Activated T-helper 2 cell treated with anti-CD3 and anti-CD28 coated beads, Interferon-gamma antibody, Interleukin-2, Interleukin-4, amounts not matched to agents 10 μg/mL and 5 μg/mL and 100 μg/mL, durations not matched to agents 14 hours and 24 hours and 36 hours (primary cell): ENCODE measurements at regions of chr4 and their contacts with region 1.

Region 1: GRCh38 chr4:2934813-2935761 is 28.1 kb downstream of the NOP14 start:
- DNase-seq: peak; percentile 93
- H3K4me3 Mint-ChIP-seq: peak overlapping the region; percentile 87
- H3K27ac Mint-ChIP-seq: peak overlapping the region; percentile 89
- H3K4me1 Mint-ChIP-seq: peaks cover 43% of the 10 kb centered on the region
- H3K27me3 Mint-ChIP-seq: no peaks in the 10 kb centered on the region

Region 2: GRCh38 chr4:2536193-2537010 is 398.7 kb before region 1 on chr4 and contains the start of gene FAM193A:
- intact Hi-C with region 1: loop called (anchors 2 kb)
- DNase-seq: peak; percentile 99
- H3K4me3 Mint-ChIP-seq: peak within 1 kb of the TSS; percentile 90
- H3K27ac Mint-ChIP-seq: peak within 1 kb of the TSS; percentile 93
- H3K4me1 Mint-ChIP-seq: peaks cover 10% of the 10 kb centered on the region
- H3K27me3 Mint-ChIP-seq: no peaks in the 10 kb centered on the region
- total RNA-seq, gene FAM193A: 30.8 and 31.2 TPM in 2 replicates

Region 3: DNA sequence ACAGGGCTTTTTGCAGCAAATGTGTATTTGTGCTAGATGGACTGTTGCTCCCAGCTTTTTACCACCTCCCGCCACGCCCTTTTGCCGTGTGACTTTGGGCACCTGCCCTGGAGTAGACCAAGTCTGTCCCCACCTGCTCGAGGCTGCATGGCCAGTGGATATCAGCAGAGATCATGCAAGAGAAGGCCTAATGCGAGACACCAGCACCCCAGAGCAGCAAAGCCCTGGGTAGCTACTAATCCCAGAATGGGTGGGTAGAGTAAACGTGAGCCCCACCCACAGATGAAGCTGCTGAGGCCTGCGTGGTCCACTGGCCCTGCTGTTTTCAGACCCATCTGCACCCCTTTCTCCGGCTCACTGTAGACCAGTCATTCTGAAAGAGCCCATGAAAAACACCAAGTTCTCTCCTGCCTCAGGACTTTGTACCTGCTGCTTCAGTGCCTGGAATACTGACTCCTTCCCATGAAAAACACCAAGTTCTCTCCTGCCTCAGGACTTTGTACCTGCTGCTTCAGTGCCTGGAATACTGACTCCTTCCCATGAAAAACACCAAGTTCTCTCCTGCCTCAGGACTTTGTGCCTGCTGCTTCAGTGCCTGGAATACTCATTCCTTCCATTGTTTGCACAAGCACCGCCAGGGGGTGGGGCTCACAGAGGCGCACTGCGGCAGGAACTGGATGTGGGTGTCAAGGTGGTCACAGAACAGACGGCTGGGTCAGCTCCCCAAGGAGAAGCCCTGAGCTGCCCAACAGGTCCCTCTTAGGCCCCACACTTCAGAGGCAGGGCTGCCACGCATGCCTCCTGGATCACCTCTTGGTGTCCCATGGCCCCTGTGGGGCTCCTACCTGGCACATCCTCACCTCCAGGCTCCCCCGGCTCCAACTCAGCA is 173.8 kb before region 1 on chr4:
- intact Hi-C with region 1: loop called (anchors 5 kb)
- DNase-seq: no peak
- H3K4me3 Mint-ChIP-seq: no peak overlapping the region
- H3K27ac Mint-ChIP-seq: no peak overlapping the region
- H3K4me1 Mint-ChIP-seq: peaks cover 12% of the 10 kb centered on the region
- H3K27me3 Mint-ChIP-seq: no peaks in the 10 kb centered on the region

Region 4: DNA sequence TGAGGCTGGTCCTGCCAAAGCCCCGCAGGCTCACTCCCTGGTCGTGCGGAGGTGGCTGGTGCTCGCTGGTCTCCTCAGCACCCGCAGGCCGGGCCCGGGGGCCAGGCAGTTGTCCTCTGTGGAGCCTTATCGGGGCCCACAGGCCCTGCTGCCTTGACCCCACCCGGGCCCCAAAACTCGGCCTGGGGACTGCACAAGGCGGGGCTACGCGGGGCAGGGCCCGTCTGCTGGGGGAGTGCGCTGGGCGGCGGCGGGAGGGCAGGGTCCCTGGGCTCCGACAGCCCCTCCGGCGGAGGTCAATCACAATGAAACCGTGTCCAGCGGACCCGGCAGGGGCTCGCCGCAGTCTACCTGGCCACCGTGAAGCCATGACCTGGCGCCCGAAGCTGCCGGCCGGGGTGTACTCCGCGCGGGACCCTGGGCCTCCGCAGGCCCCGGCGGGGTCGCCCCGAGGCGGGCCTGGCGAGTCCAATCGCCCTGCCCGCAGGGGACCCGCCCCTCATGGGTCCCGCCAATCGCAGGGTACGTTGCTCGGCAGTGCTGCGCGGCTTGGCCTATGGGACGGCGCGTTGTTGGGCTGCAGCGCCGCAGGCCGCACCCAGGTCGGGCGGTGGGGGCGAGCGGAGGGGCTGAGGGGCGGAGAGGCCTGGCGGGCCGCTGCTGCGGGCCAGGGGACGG is 91.7 kb before region 1 on chr4 and contains the start of gene ADD1:
- intact Hi-C with region 1: loop called (anchors 5 kb)
- DNase-seq: peak; percentile 95
- H3K4me3 Mint-ChIP-seq: peak within 1 kb of the TSS; percentile 89
- H3K27ac Mint-ChIP-seq: peak within 1 kb of the TSS; percentile 82
- H3K4me1 Mint-ChIP-seq: peaks cover 36% of the 10 kb centered on the region
- H3K27me3 Mint-ChIP-seq: no peaks in the 10 kb centered on the region
- total RNA-seq, gene ADD1: 240 and 242 TPM in 2 replicates

Region 5: DNA sequence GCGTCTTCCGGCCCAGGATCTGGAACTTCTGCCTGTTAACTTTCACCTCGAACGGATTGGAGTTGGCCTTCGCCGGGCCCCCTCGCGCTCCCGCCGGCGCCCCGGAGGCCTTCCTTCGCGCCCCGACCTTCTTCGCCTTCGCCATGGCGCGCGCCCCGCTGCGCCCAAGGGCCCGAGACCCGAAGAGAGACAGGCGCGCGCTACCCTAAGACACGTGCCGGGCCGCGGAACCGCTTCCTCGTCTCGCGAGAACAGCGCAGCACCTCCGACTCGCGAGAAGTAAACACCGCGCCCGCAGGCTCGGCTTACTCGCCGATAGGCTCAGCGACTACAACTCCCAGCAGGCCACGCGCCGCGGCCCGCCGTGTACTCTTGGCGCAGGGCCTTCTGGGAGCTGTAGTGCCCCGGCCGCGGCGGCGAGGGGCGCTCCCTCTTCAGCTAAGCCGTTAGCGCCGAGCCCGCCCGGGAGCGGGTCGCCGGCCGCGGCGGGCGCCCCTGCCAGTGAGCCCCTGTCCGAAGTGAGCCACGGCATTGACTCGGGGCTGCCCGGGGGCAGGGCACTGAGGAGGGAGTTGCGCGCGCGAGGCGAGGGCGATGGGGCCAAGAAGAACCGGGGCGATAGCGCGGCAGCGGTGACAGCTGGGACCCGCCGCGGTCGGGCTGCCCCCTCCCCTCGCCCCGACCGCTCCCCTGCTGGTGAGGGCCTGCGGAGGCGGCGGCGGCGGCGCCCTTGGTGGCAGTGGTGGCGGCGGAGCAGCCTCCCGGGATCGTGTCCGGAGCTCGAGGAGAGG is 28.3 kb after region 1 on chr4 and contains the starts of genes GRK4 and NOP14:
- intact Hi-C with region 1: loop called (anchors 1 kb)
- DNase-seq: peak; percentile 97
- H3K4me3 Mint-ChIP-seq: peak within 1 kb of the TSS; percentile 92
- H3K27ac Mint-ChIP-seq: peak within 1 kb of the TSS; percentile 87
- H3K4me1 Mint-ChIP-seq: peaks cover 28% of the 10 kb centered on the region
- H3K27me3 Mint-ChIP-seq: no peaks in the 10 kb centered on the region
- total RNA-seq, gene GRK4: 4.5 and 4.6 TPM in 2 replicates
- total RNA-seq, gene NOP14: 104 and 106 TPM in 2 replicates